GM12878 (cell line): ENCODE measurements at regions of chr2 and their contacts with region 1.

Region 1: DNA sequence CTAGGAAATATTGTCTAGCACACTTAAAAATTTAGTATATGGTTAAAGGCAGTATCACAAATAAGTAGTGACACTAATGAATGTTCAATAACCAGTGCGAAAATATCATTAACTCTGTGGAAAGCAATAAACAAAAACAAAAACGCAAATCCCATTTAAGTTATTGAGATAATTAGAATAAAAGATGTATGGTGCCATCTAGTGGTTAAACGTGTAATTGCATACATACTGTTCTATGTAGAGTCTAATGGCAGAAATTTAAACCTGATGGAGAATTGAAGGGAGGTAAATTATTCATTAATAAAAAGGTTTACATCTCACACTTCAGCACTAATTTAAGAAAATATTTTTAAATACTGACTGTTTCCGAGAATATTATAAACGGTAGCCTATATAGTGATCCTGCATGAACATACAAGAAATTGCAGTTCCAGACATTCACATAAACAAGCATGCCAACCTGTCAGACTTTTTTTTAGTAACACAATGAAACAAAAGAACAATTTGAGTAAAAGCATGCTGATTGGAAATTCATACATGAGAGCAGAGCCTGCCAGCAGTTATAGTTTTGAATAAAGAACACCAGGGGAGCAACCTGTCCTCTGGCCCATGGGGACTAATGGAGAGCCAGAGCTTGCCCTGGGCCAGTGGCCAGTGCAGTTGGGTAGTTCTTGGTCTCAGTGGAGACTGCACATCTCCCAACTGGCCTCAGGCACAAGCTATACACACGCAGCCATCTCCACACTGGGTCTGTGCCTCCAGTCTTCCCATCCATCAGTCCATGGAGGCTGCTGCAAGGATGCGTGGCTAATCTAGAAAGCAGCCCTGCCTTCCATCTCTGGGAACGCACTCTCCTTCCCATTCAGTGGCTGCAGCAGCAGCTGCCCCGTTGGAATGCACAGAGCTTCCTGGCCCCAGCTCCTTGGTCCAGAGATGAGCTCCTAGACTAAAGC is 28.0 kb downstream of the GCG start:
- DNase-seq: peak; percentile 9
- ATAC-seq: peak; percentile 57
- H3K4me3 ChIP-seq: no peak overlapping the region
- H3K27ac ChIP-seq: no peak overlapping the region
- H3K4me1 ChIP-seq: peaks cover 7% of the 10 kb centered on the region; the same call in 1 of the 2 replicates
- H3K27me3 ChIP-seq: no peaks in the 10 kb centered on the region
- CTCF ChIP-seq: peak; percentile 48 to 71 (median 55); a peak in 5 of 6 replicates
- EP300 ChIP-seq: no peak
- POLR2A ChIP-seq: no peak
- RAD21 ChIP-seq: peak; percentile 69

Region 2: GRCh38 chr2:161847910-161848309 is 276.2 kb before region 1 on chr2:
- CTCF ChIA-PET with region 1: no interaction called
- POLR2A ChIA-PET with region 1: no interaction called
- RAD21 ChIA-PET with region 1: no interaction called
- SMC1A ChIA-PET with region 1: no interaction called
- in situ Hi-C with region 1: no loop called
- intact Hi-C with region 1: no loop called
- DNase-seq: no peak
- ATAC-seq: no peak
- H3K4me3 ChIP-seq: no peak overlapping the region
- H3K27ac ChIP-seq: no peak overlapping the region
- H3K4me1 ChIP-seq: no peaks in the 10 kb centered on the region
- H3K27me3 ChIP-seq: no peaks in the 10 kb centered on the region
- CTCF ChIP-seq: no peak
- EP300 ChIP-seq: no peak
- POLR2A ChIP-seq: no peak
- RAD21 ChIP-seq: no peak

Region 3: DNA sequence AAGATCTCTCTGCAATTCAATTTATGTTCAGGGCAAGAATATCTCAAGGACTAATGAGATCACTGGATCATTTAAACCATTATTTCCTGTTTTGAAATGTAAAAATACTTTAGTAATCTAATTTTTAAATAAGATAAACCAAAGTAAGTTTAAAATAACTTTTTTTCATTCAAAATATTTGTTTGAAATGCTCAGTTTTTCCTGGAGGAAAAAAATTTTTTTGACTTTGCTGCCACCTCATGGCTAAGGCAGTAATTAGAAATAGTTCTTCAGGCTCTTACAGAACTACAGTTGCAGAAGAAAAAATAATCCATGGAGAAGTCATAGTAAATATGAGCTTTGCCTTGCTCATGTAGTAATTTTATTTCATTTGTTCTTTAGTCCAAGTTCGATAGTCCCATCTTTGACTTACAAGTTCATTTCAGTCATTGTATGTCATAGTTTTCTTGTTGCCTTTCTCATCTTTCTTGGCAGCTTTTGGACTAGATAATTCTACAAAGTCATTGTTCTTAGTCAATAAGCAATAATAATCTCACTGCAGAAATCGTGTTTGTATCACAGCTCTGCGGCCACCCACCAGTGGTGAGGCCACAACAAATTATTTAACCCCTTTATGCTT is 177.5 kb before region 1 on chr2:
- CTCF ChIA-PET with region 1: interaction called, 35 read pairs
- POLR2A ChIA-PET with region 1: no interaction called
- RAD21 ChIA-PET with region 1: interaction called, 20 read pairs
- SMC1A ChIA-PET with region 1: interaction called, 25 read pairs
- in situ Hi-C with region 1: no loop called
- intact Hi-C with region 1: no loop called
- DNase-seq: no peak
- ATAC-seq: peak; percentile 60
- H3K4me3 ChIP-seq: no peak overlapping the region
- H3K27ac ChIP-seq: no peak overlapping the region
- H3K4me1 ChIP-seq: no peaks in the 10 kb centered on the region
- H3K27me3 ChIP-seq: no peaks in the 10 kb centered on the region
- CTCF ChIP-seq: peak; percentile 33 to 48 (median 36); a peak in 3 of 6 replicates
- EP300 ChIP-seq: no peak
- POLR2A ChIP-seq: no peak
- RAD21 ChIP-seq: peak; percentile 76

Region 4: DNA sequence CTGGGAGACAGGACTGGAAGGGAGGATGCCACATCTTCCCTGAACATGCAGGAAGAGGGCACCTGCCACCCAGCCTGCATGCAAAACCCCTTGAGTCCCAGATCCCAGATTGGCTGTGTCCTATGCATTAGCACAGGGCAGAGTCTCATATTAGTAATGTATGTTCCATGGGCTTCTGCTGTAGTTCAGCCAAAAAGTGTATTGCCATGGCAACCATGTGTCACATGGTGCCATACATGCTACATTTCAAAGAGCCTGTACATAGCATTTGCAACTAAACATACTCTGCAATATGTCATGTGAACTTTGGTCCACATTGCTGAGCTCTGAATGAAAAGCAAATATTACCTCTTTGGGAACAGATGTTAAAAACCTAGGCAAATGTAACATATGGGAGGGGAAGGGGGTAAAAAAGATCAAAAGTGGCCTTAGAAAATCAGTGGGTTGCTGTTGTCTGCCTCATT is 128.5 kb before region 1 on chr2:
- CTCF ChIA-PET with region 1: interaction called, 15 read pairs
- POLR2A ChIA-PET with region 1: no interaction called
- RAD21 ChIA-PET with region 1: interaction called, 9 read pairs
- SMC1A ChIA-PET with region 1: interaction called, 8 read pairs
- in situ Hi-C with region 1: loop called (anchors 5 kb)
- intact Hi-C with region 1: no loop called
- DNase-seq: no peak
- ATAC-seq: no peak
- H3K4me3 ChIP-seq: no peak overlapping the region
- H3K27ac ChIP-seq: no peak overlapping the region
- H3K4me1 ChIP-seq: peaks cover 7% of the 10 kb centered on the region
- H3K27me3 ChIP-seq: no peaks in the 10 kb centered on the region
- CTCF ChIP-seq: no peak
- EP300 ChIP-seq: no peak
- POLR2A ChIP-seq: no peak
- RAD21 ChIP-seq: no peak

Region 5: GRCh38 chr2:162013514-162014475 is 110.3 kb before region 1 on chr2:
- CTCF ChIA-PET with region 1: interaction called, 48 read pairs
- POLR2A ChIA-PET with region 1: no interaction called
- RAD21 ChIA-PET with region 1: interaction called, 28 read pairs
- SMC1A ChIA-PET with region 1: interaction called, 12 read pairs
- in situ Hi-C with region 1: no loop called
- intact Hi-C with region 1: loop called (anchors 1 kb)
- DNase-seq: no peak
- ATAC-seq: no peak
- H3K4me3 ChIP-seq: no peak overlapping the region
- H3K27ac ChIP-seq: no peak overlapping the region
- H3K4me1 ChIP-seq: no peaks in the 10 kb centered on the region
- H3K27me3 ChIP-seq: no peaks in the 10 kb centered on the region
- CTCF ChIP-seq: no peak
- EP300 ChIP-seq: no peak
- POLR2A ChIP-seq: no peak
- RAD21 ChIP-seq: no peak

Region 6: GRCh38 chr2:162073888-162074645 is 50.0 kb before region 1 on chr2 and contains the start of gene DPP4:
- CTCF ChIA-PET with region 1: interaction called, 6 read pairs
- POLR2A ChIA-PET with region 1: interaction called, 4 read pairs
- RAD21 ChIA-PET with region 1: interaction called, 6 read pairs
- SMC1A ChIA-PET with region 1: interaction called, 10 read pairs
- in situ Hi-C with region 1: no loop called
- intact Hi-C with region 1: loop called (anchors 2 kb)
- DNase-seq: no peak
- ATAC-seq: peak; percentile 90
- H3K4me3 ChIP-seq: peak within 1 kb of the TSS; percentile 91
- H3K27ac ChIP-seq: peak within 1 kb of the TSS; percentile 28
- H3K4me1 ChIP-seq: peaks cover 6% of the 10 kb centered on the region; the same call in 1 of the 2 replicates
- H3K27me3 ChIP-seq: no peaks in the 10 kb centered on the region
- CTCF ChIP-seq: 0 out of 6 replicates have a peak, but pooled peaks of 1 of the 3 experiments have one; percentile 4
- EP300 ChIP-seq: peak in 1 of 2 experiments; percentile 14; a peak in 1 of 4 replicates
- POLR2A ChIP-seq: peak; percentile 75
- RAD21 ChIP-seq: no peak
- polyA plus RNA-seq, gene DPP4: 4.1 to 4.8 TPM

Region 7: GRCh38 chr2:162143969-162144368 is 19.9 kb after region 1 on chr2:
- CTCF ChIA-PET with region 1: interaction called, 26 read pairs
- POLR2A ChIA-PET with region 1: no interaction called
- RAD21 ChIA-PET with region 1: interaction called, 8 read pairs
- SMC1A ChIA-PET with region 1: interaction called, 12 read pairs
- in situ Hi-C with region 1: no loop called
- intact Hi-C with region 1: no loop called
- DNase-seq: no peak
- ATAC-seq: no peak
- H3K4me3 ChIP-seq: no peak overlapping the region
- H3K27ac ChIP-seq: no peak overlapping the region
- H3K4me1 ChIP-seq: no peaks in the 10 kb centered on the region
- H3K27me3 ChIP-seq: no peaks in the 10 kb centered on the region; a peak in 1 of 4 replicates
- CTCF ChIP-seq: peak in 1 of 3 experiments; percentile 6; a peak in 1 of 6 replicates
- EP300 ChIP-seq: no peak
- POLR2A ChIP-seq: no peak
- RAD21 ChIP-seq: 0 out of 2 replicates have a peak, but pooled peaks have one; percentile 3